Posterior cingulate gyrus (tissue), 11 donors: ENCODE measurements at regions of chr9 and their contacts with region 1.

Region 1: DNA sequence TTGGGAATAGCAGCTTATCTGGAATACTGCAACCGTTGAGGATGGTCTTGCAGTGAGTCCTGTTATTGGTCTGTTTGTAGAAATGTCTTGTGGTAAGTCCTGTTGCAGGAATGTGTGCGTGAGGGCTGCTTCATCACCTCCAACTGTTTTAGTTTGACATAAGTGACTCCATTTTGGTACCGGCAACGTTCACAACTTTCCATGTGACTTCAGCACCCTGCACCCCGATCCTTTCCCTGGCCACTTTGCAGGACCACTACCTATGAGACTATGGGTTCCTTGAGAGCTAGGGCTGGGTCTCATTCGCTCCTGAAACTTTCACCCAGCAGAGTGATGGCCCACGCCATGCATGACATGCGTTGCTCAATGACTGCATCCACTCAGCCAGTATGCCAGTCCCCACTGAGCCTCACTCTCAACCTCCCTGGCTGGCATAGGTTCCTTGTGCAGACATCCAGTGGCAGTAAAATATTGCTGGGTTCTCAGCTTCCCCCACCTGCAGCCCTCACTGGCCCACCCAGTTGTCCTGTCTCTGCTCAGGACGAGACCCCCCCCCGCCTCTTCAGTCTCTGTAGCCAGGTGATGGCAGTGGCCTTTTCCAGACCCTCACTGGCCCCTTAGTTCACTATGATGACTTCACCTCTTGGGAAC is 8.0 kb downstream of the SURF6 start:
- DNase-seq: peak in 3 of 10 donors; percentile 37 to 40 (median 39)

Region 2: DNA sequence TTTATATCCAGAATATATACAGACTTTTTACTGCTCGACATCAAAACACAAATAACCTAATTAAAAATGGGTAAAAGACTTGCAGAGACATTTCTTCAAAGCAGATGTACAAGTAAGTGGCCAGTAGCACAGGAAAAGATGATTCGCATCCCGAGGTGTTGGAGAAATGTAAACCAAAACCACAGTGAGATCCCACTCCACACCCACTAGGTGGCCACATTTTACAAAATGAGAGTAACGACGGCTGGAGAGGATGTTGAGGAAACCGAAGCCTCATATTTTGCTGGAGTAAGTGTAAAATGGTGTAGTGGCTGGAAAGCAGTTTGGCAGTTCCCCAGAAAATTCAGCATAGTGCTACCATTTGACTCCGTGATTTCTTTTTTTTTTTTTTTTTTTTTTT is 143.0 kb before region 1 on chr9:
- intact Hi-C with region 1: loop called (anchors 5 kb)
- DNase-seq: peak in 4 of 10 donors; percentile 45 to 83 (median 47)